ENCODE measurements at regions of chr3 and their contacts with region 1.

Region 1: GRCh38 chr3:152356870-152357276 is 88.1 kb downstream of the MBNL1 start:
- DNase-seq: no peak
- H3K4me3 ChIP-seq: no peak overlapping the region
- H3K4me3 Mint-ChIP-seq: no peak overlapping the region
- H3K27ac ChIP-seq: peak overlapping the region in 1 of 2 donors; percentile 38
- H3K27ac Mint-ChIP-seq: peak overlapping the region in 2 of 7 donors; percentile 38 to 77
- H3K4me1 ChIP-seq: no peaks in the 10 kb centered on the region
- H3K4me1 Mint-ChIP-seq: peaks cover 2% of the 10 kb centered on the region
- H3K27me3 ChIP-seq: no peaks in the 10 kb centered on the region
- H3K27me3 Mint-ChIP-seq: no peaks in the 10 kb centered on the region
- CTCF ChIP-seq: no peak

Region 2: GRCh38 chr3:152322756-152323155 is 34.1 kb before region 1 on chr3:
- intact Hi-C with region 1: loop called in 1 of 2 experiments (anchors 5 kb)
- DNase-seq: peak in 2 of 3 donors; percentile 13 to 19
- H3K4me3 ChIP-seq: no peak overlapping the region
- H3K4me3 Mint-ChIP-seq: no peak overlapping the region
- H3K27ac ChIP-seq: peak overlapping the region in 1 of 2 donors; percentile 56
- H3K27ac Mint-ChIP-seq: peak overlapping the region in 6 of 7 donors; percentile 10 to 69 (median 40)
- H3K4me1 ChIP-seq: peaks cover 33 to 57% of the 10 kb centered on the region in 2 donors
- H3K4me1 Mint-ChIP-seq: peaks cover 62% of the 10 kb centered on the region
- H3K27me3 ChIP-seq: no peaks in the 10 kb centered on the region
- H3K27me3 Mint-ChIP-seq: no peaks in the 10 kb centered on the region
- CTCF ChIP-seq: no peak

Measured in CD14-positive monocyte (primary cell).